GM12878 (cell line): ENCODE measurements at regions of chr9 and their contacts with region 1.

Region 1: DNA sequence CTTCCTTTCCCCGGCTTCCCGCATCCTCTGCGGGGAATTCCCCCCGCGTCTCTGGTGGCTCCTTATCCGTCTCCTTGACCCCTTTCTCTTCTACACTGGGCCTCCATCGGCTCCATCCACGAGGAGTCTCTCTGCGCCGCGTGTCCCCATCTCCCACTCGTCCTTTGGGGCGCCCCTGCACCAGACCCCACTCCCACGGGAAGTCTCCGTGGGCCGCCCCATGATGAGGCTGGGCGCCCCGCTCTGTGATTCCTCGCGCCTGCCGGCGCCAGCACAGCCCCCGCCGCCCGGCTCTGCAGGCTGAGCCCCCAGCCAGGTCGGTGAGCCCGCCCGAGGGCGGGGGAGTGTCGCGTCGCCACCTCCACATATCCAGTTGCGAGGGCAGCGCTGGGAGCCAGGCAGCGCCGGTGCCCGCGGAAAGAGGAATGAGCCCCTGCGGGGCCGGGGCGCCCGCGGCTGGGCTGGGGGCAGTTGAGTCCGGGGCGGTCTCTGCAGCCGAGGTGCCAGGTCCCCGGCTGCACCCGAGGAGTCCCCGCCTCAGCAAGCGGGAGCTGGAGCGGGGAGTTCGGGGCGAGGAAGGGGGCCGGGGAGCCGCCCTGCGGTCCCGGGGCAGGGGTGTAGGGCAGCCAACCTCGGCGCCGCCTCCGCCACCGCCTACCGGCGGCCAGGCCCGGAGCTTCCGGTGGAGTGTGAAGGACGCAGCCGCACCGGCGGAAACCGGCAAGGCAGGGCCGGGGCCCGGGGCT is 2.1 kb upstream of the TRAF1 start:
- DNase-seq: no peak
- ATAC-seq: peak; percentile 34
- H3K4me3 ChIP-seq: peak overlapping the region; percentile 88
- H3K27ac ChIP-seq: peak overlapping the region; percentile 99
- H3K4me1 ChIP-seq: peaks cover 48% of the 10 kb centered on the region
- H3K27me3 ChIP-seq: no peaks in the 10 kb centered on the region
- CTCF ChIP-seq: no peak
- EP300 ChIP-seq: no peak
- POLR2A ChIP-seq: peak; percentile 81
- RAD21 ChIP-seq: no peak

Region 2: DNA sequence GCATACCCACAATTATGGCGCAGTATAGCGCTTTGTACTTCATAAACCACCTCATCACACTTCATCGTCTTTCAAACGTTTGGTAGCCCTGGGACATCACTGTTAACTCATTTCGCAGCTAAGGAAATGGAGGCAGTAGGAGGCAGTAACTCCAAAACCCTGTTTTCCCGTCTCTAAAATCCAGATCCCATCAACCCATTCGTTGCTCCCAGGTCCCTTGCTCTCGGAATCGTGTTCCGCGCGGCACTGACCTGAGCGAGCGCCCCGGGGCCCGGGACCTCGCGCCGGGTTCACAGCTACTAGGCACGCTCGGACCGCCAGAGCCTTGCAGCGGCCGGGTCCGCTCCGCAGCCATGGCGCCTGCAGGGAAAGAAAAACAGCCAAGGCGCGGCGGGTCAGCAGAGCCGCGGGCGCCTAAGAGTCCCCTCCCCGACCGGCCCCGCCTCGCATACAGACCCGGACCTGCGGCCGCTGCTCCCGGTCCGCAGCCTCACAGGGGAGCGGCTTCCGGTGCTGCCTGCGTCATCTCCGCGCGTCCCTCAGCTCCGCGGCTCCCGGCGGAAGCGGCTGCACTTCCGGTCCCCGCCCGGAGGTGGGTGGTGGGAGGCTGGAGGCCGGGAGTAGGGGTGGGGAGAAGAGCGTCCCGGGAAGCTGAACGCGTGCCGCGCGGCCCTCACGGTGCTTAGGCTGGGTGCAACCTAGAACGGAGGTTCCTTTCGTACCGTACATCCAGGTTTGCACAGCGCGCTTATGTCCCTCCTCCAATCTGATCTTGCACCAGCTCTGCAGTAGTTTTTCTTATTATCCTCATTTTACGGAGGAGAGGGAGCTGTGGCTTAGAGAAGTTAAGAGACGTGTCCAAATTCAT is 135.5 kb before region 1 on chr9 and contains the start of gene FBXW2:
- CTCF ChIA-PET with region 1: no interaction called
- POLR2A ChIA-PET with region 1: interaction called, 11 read pairs
- RAD21 ChIA-PET with region 1: interaction called, 5 read pairs
- SMC1A ChIA-PET with region 1: interaction called, 4 read pairs
- in situ Hi-C with region 1: no loop called
- intact Hi-C with region 1: loop called (anchors 5 kb)
- DNase-seq: peak; percentile 59
- ATAC-seq: peak; percentile 95
- H3K4me3 ChIP-seq: peak within 1 kb of the TSS; percentile 90
- H3K27ac ChIP-seq: peak within 1 kb of the TSS; percentile 86
- H3K4me1 ChIP-seq: peaks cover 9% of the 10 kb centered on the region
- H3K27me3 ChIP-seq: no peaks in the 10 kb centered on the region
- CTCF ChIP-seq: no peak
- EP300 ChIP-seq: no peak
- POLR2A ChIP-seq: peak; percentile 94
- RAD21 ChIP-seq: no peak
- polyA plus RNA-seq, gene FBXW2: 2.9 to 3.0 TPM

Region 3: DNA sequence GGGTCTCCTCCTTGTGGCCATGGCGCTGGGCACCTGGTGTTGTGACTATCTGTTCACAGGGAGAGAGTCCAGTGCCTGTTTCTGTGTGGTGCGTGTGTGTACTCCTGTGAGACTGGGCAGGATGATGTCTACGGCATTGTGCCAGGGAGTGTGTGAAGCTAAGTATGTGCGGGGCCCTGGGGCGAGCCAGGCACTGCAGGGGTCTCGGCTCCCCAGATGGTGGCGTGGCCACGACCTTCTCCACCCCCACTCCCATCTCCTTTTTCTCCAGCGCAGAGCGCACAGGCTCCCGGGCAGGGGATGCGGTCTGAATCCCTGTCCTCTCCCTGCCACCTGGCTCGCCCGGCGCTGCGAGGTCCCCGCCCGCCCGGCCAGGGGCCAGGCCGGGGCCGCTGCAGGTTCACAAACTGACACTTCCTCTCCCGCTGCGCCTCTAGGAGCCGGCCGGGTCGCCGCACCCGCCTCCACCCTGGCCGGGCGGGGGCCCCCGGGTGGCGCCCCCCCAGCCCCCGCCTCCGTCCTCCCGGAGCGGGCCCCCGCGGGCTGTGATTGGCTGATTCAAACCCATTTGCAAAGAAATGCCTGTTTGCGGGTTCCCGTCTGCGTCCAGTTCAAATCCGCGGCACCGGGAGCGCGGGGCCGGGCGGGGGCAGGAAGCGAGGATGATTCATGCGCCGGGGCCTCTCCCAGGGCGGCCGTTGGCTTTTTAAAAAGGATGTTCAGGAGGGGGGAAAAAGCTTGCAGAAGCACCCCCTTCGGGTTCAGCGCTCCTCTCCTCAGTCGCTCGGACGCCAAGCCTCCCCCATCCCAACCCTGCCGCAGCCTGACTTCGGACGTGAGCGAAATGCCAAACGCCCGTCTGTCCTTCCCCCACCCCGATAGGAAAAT is 52.5 kb before region 1 on chr9:
- CTCF ChIA-PET with region 1: interaction called, 30 read pairs
- POLR2A ChIA-PET with region 1: interaction called, 7 read pairs
- RAD21 ChIA-PET with region 1: interaction called, 16 read pairs
- SMC1A ChIA-PET with region 1: interaction called, 57 read pairs
- in situ Hi-C with region 1: no loop called
- intact Hi-C with region 1: loop called (anchors 2 kb)
- DNase-seq: no peak
- ATAC-seq: peak; percentile 80
- H3K4me3 ChIP-seq: peak overlapping the region; percentile 92
- H3K27ac ChIP-seq: peak overlapping the region; percentile 93
- H3K4me1 ChIP-seq: peaks cover 27% of the 10 kb centered on the region
- H3K27me3 ChIP-seq: no peaks in the 10 kb centered on the region
- CTCF ChIP-seq: no peak; a peak in 1 of 6 replicates
- EP300 ChIP-seq: peak in 1 of 2 experiments; percentile 54; a peak in 1 of 4 replicates
- POLR2A ChIP-seq: peak; percentile 79
- RAD21 ChIP-seq: no peak

Region 4: DNA sequence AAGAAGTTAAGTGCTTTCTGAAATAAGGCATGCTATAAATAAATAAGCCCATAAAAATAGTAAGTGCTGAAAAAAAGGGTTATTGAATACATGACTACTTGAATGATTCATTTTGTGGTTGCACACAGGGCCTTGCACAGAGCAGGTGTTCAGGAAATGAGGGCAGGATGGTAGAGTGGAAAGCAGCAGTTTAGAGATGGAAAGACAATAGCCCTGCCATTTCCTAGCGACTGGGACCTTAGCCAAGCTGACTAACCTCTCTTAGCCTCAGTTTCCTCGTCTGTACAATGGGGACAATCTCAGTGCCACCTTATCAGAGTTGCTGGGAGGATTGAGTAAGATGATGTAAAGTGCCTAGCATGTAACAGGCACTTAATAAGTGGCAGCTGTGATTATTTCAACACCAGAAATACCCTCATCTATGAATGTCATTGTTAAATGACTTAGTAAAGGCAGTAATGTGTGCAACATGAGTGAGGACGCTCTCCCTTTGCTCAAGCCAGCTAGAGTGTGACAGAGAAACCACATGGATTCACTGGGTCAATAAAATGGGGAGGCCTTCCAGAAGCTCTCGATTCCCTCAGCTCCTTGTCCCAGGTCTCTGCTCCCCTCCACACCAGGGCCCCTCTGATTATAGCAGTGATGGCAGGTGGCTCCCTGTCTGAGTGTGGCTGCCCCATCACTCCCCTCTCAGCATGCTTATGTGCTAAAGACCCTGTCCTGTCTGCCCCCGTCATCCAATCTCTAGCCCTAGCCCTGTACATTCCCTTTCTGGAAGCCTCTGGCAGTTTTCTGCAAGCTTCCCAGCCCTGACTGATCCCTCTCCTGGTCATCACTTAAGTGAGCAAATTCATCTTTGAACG is 35.7 kb before region 1 on chr9:
- CTCF ChIA-PET with region 1: interaction called, 13 read pairs
- POLR2A ChIA-PET with region 1: interaction called, 383 read pairs
- RAD21 ChIA-PET with region 1: interaction called, 104 read pairs
- SMC1A ChIA-PET with region 1: interaction called, 522 read pairs
- in situ Hi-C with region 1: no loop called
- intact Hi-C with region 1: loop called (anchors 2 kb)
- DNase-seq: no peak
- ATAC-seq: peak; percentile 80
- H3K4me3 ChIP-seq: no peak overlapping the region
- H3K27ac ChIP-seq: peak overlapping the region; percentile 94
- H3K4me1 ChIP-seq: peaks cover 62% of the 10 kb centered on the region
- H3K27me3 ChIP-seq: no peaks in the 10 kb centered on the region
- CTCF ChIP-seq: no peak
- EP300 ChIP-seq: peak; percentile 91 to 95
- POLR2A ChIP-seq: peak; percentile 62
- RAD21 ChIP-seq: no peak

Region 5: GRCh38 chr9:120916588-120916987 is 12.1 kb before region 1 on chr9:
- CTCF ChIA-PET with region 1: interaction called, 110 read pairs
- POLR2A ChIA-PET with region 1: interaction called, 224 read pairs
- RAD21 ChIA-PET with region 1: interaction called, 196 read pairs
- SMC1A ChIA-PET with region 1: interaction called, 108 read pairs
- in situ Hi-C with region 1: no loop called
- intact Hi-C with region 1: no loop called
- DNase-seq: no peak
- ATAC-seq: no peak
- H3K4me3 ChIP-seq: no peak overlapping the region
- H3K27ac ChIP-seq: peak overlapping the region; percentile 20; the same call in 1 of the 2 replicates
- H3K4me1 ChIP-seq: peaks cover 21% of the 10 kb centered on the region
- H3K27me3 ChIP-seq: no peaks in the 10 kb centered on the region
- CTCF ChIP-seq: no peak; a peak in 1 of 6 replicates
- EP300 ChIP-seq: no peak
- POLR2A ChIP-seq: no peak
- RAD21 ChIP-seq: no peak

Region 6: DNA sequence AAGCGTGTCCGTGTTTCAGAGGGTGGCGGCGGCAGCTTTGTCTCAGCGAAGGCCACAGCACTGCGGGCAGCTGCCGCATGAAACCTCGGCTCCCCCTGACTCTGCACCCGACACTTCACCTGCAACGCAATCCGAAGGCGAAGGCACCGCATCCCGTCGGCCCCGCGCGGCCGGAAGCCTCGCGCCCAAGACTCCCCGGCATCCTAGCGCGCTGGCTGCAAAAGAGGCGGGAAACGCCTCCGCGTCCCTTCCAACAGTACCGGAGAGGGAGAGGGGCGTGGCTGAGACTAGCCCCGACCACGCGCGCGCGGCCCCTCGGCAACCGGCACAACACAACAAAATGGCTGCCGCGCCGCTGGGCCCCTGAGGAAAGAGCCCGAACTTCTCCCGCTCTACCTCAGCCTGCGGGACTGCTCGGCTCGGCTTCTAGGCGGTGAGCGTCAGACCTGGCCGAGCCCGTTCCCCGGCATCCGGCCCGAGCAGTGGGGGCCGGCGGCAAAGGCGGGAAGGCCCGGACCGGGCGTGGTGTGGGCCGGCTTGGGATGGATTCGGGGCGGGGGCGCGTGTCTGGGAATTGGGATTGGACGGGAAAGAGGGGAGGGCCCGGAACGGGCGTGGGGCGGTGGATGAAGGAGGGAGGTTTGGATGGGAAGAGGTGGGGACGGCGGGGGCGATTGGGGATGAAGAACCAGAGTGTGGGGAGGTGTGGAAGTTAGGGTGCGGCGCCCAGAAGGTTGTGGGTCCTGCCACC is 146.2 kb after region 1 on chr9 and contains the start of gene CNTRL:
- CTCF ChIA-PET with region 1: no interaction called
- POLR2A ChIA-PET with region 1: interaction called, 3 read pairs
- RAD21 ChIA-PET with region 1: interaction called, 3 read pairs
- SMC1A ChIA-PET with region 1: no interaction called
- in situ Hi-C with region 1: no loop called
- intact Hi-C with region 1: loop called (anchors 5 kb)
- DNase-seq: peak; percentile 62
- ATAC-seq: peak; percentile 84
- H3K4me3 ChIP-seq: peak within 1 kb of the TSS; percentile 91
- H3K27ac ChIP-seq: peak within 1 kb of the TSS; percentile 98
- H3K4me1 ChIP-seq: peaks cover 29% of the 10 kb centered on the region
- H3K27me3 ChIP-seq: no peaks in the 10 kb centered on the region
- CTCF ChIP-seq: no peak
- EP300 ChIP-seq: no peak
- POLR2A ChIP-seq: peak; percentile 93
- RAD21 ChIP-seq: no peak
- polyA plus RNA-seq, gene CNTRL: 20.0 to 22.0 TPM